Cardiac septum (tissue), 1 donor: ENCODE measurements at regions of chr4 and their contacts with region 1.

Region 1: GRCh38 chr4:38856524-38857337 is at the start of gene TLR6:
- DNase-seq: no peak
- total RNA-seq, gene TLR6: 1.2 TPM

Region 2: GRCh38 chr4:38442073-38442788 is 414.5 kb before region 1 on chr4:
- intact Hi-C with region 1: no loop called
- DNase-seq: no peak

Region 3: GRCh38 chr4:38759113-38759789 is 97.5 kb before region 1 on chr4:
- intact Hi-C with region 1: loop called (anchors 5 kb)
- DNase-seq: peak; percentile 78

Region 4: GRCh38 chr4:38804654-38805295 is 52.0 kb before region 1 on chr4 and contains the start of gene TLR1:
- intact Hi-C with region 1: loop called (anchors 5 kb)
- DNase-seq: no peak
- total RNA-seq, gene TLR1: 4.9 TPM